SK-N-SH (cell line): ENCODE measurements at regions of chr22 and their contacts with region 1.

Region 1: GRCh38 chr22:30822216-30823014 is 127.7 kb downstream of the OSBP2 start:
- DNase-seq: peak; percentile 87
- H3K4me3 ChIP-seq: peak overlapping the region; percentile 46 to 49
- H3K27ac ChIP-seq: no peak overlapping the region
- H3K4me1 ChIP-seq: peaks cover 0 to 22% of the 10 kb centered on the region in 2 experiments; a peak in 1 of 4 replicates
- H3K27me3 ChIP-seq: no peaks in the 10 kb centered on the region
- CTCF ChIP-seq: no peak
- EP300 ChIP-seq: no peak
- RAD21 ChIP-seq: no peak

Region 2: GRCh38 chr22:30802202-30803166 is 19.9 kb before region 1 on chr22:
- CTCF ChIA-PET with region 1: interaction called, 11 read pairs
- POLR2A ChIA-PET with region 1: interaction called, 4 read pairs
- DNase-seq: peak; percentile 90
- H3K4me3 ChIP-seq: peak overlapping the region; percentile 43 to 61
- H3K27ac ChIP-seq: no peak overlapping the region
- H3K4me1 ChIP-seq: peaks cover 8 to 13% of the 10 kb centered on the region in 2 experiments; a peak in 2 of 4 replicates
- H3K27me3 ChIP-seq: 0 out of 2 replicates have a peak, but pooled peaks cover 6% of the 10 kb centered on the region
- CTCF ChIP-seq: no peak; the same call in 1 of the 2 replicates
- EP300 ChIP-seq: no peak
- RAD21 ChIP-seq: no peak

Region 3: GRCh38 chr22:30809086-30809485 is 13.3 kb before region 1 on chr22:
- CTCF ChIA-PET with region 1: interaction called, 11 read pairs
- POLR2A ChIA-PET with region 1: interaction called, 4 read pairs
- DNase-seq: no peak
- H3K4me3 ChIP-seq: no peak overlapping the region
- H3K27ac ChIP-seq: no peak overlapping the region
- H3K4me1 ChIP-seq: peaks cover 0 to 10% of the 10 kb centered on the region in 2 experiments; a peak in 2 of 4 replicates
- H3K27me3 ChIP-seq: no peaks in the 10 kb centered on the region
- CTCF ChIP-seq: no peak
- EP300 ChIP-seq: no peak
- RAD21 ChIP-seq: no peak